B cell (primary cell): ENCODE measurements at regions of chr1 and their contacts with region 1.

Region 1: GRCh38 chr1:35451125-35451528 is 106.1 kb downstream of the KIAA0319L start:
- DNase-seq: peak; percentile 70
- ATAC-seq: peak; percentile 84
- H3K4me3 ChIP-seq: no peak overlapping the region
- H3K4me3 Mint-ChIP-seq: no peak overlapping the region
- H3K27ac ChIP-seq: no peak overlapping the region
- H3K27ac Mint-ChIP-seq: peak overlapping the region; percentile 23
- H3K4me1 ChIP-seq: no peaks in the 10 kb centered on the region
- H3K4me1 Mint-ChIP-seq: no peaks in the 10 kb centered on the region
- H3K27me3 ChIP-seq: no peaks in the 10 kb centered on the region
- H3K27me3 Mint-ChIP-seq: no peaks in the 10 kb centered on the region
- CTCF ChIP-seq: peak; percentile 82

Region 2: DNA sequence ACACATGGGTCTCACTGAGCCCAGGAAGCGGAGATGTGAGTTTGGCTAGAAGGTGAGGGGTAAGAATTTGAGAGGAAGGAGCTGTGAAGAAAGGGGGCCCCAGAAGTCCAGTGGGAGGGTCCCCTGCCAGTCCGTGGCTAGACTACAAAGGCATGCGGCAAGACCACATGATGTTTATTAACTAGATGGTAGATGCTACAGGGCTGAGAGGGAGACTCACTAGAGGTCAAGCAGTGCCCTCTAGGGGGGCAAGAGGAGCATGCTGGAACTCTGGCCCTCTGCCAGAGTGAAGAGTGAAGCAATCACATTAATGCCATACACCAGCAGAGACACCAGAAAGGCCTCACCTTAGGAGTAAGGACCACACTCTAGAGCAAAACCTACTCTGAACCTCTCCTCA is 93.9 kb after region 1 on chr1:
- CTCF ChIA-PET with region 1: interaction called, 15 read pairs
- POLR2A ChIA-PET with region 1: no interaction called
- intact Hi-C with region 1: no loop called
- DNase-seq: peak; percentile 29
- ATAC-seq: no peak
- H3K4me3 ChIP-seq: no peak overlapping the region
- H3K4me3 Mint-ChIP-seq: no peak overlapping the region
- H3K27ac ChIP-seq: no peak overlapping the region
- H3K27ac Mint-ChIP-seq: no peak overlapping the region
- H3K4me1 ChIP-seq: peaks cover 3 to 5% of the 10 kb centered on the region in 2 donors
- H3K4me1 Mint-ChIP-seq: peaks cover 28% of the 10 kb centered on the region
- H3K27me3 ChIP-seq: no peaks in the 10 kb centered on the region
- H3K27me3 Mint-ChIP-seq: no peaks in the 10 kb centered on the region
- CTCF ChIP-seq: no peak

Region 3: DNA sequence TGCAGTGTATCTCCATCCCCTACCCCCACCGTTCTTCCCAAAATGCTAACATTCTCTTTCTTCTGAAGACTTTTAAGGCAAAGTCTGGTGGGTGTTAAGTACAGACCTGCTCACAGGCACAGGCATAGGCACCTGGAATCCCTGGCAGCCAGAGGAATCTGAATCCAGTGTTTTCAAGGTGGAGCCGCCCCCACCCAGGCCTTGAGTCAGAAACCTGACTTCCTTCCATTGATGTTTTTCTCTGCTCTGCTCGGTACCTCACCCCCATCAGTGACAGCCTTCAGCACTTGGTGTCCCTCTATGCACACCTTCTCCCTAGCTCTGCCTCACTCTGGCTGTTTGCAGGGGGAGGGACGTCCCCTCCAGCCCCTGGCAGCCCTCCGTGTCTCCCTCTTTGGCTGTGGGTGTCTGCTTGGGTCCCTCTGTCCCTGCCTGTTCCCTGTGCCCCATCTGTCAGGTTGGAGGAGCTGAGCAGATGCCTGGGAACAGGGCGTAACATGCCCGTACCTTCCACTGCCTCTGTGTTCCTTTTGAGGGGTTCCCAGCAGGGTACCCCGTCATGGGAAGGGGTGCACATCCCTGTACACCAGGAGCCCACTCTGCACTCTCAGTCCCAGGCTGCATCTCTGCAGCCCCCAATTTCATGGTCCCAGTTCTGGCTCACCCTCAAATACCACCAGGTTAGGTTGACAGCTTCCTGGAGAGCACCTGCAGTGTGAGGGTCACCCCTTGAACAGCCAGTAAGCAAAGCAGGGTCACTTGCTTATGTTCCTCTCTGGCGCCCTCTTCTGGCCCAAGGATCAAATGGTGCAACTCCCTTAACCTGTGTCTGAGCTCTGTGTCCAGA is 113.1 kb after region 1 on chr1:
- CTCF ChIA-PET with region 1: interaction called, 98 read pairs
- POLR2A ChIA-PET with region 1: interaction called, 3 read pairs
- intact Hi-C with region 1: loop called (anchors 1 kb)
- DNase-seq: peak; percentile 82
- ATAC-seq: peak; percentile 71
- H3K4me3 ChIP-seq: no peak overlapping the region
- H3K4me3 Mint-ChIP-seq: no peak overlapping the region
- H3K27ac ChIP-seq: no peak overlapping the region
- H3K27ac Mint-ChIP-seq: no peak overlapping the region
- H3K4me1 ChIP-seq: no peaks in the 10 kb centered on the region
- H3K4me1 Mint-ChIP-seq: peaks cover 17% of the 10 kb centered on the region
- H3K27me3 ChIP-seq: no peaks in the 10 kb centered on the region
- H3K27me3 Mint-ChIP-seq: no peaks in the 10 kb centered on the region
- CTCF ChIP-seq: peak; percentile 85

Region 4: GRCh38 chr1:35588197-35588910 is 137.2 kb after region 1 on chr1:
- CTCF ChIA-PET with region 1: no interaction called
- POLR2A ChIA-PET with region 1: no interaction called
- intact Hi-C with region 1: no loop called
- DNase-seq: no peak
- ATAC-seq: no peak
- H3K4me3 ChIP-seq: no peak overlapping the region
- H3K4me3 Mint-ChIP-seq: no peak overlapping the region
- H3K27ac ChIP-seq: no peak overlapping the region
- H3K27ac Mint-ChIP-seq: no peak overlapping the region
- H3K4me1 ChIP-seq: no peaks in the 10 kb centered on the region
- H3K4me1 Mint-ChIP-seq: no peaks in the 10 kb centered on the region
- H3K27me3 ChIP-seq: no peaks in the 10 kb centered on the region
- H3K27me3 Mint-ChIP-seq: no peaks in the 10 kb centered on the region
- CTCF ChIP-seq: no peak

Region 5: GRCh38 chr1:35660581-35661473 is 209.7 kb after region 1 on chr1:
- CTCF ChIA-PET with region 1: no interaction called
- POLR2A ChIA-PET with region 1: no interaction called
- intact Hi-C with region 1: no loop called
- DNase-seq: no peak
- ATAC-seq: no peak
- H3K4me3 ChIP-seq: no peak overlapping the region
- H3K4me3 Mint-ChIP-seq: no peak overlapping the region
- H3K27ac ChIP-seq: no peak overlapping the region
- H3K27ac Mint-ChIP-seq: no peak overlapping the region
- H3K4me1 ChIP-seq: no peaks in the 10 kb centered on the region
- H3K4me1 Mint-ChIP-seq: peaks cover 2% of the 10 kb centered on the region
- H3K27me3 ChIP-seq: peaks cover 0 to 2% (median 0%) of the 10 kb centered on the region in 4 experiments
- H3K27me3 Mint-ChIP-seq: peaks cover 7% of the 10 kb centered on the region
- CTCF ChIP-seq: no peak

Region 6: GRCh38 chr1:35726450-35727433 is 275.6 kb after region 1 on chr1:
- CTCF ChIA-PET with region 1: interaction called, 102 read pairs
- POLR2A ChIA-PET with region 1: interaction called, 4 read pairs
- intact Hi-C with region 1: loop called (anchors 1 kb)
- DNase-seq: peak; percentile 72
- ATAC-seq: peak; percentile 76
- H3K4me3 ChIP-seq: no peak overlapping the region
- H3K4me3 Mint-ChIP-seq: no peak overlapping the region
- H3K27ac ChIP-seq: no peak overlapping the region
- H3K27ac Mint-ChIP-seq: peak overlapping the region; percentile 26
- H3K4me1 ChIP-seq: peaks cover 0 to 6% of the 10 kb centered on the region in 2 donors
- H3K4me1 Mint-ChIP-seq: peaks cover 4% of the 10 kb centered on the region
- H3K27me3 ChIP-seq: no peaks in the 10 kb centered on the region
- H3K27me3 Mint-ChIP-seq: no peaks in the 10 kb centered on the region
- CTCF ChIP-seq: peak; percentile 87

Region 7: GRCh38 chr1:35777109-35777508 is 326.0 kb after region 1 on chr1:
- CTCF ChIA-PET with region 1: interaction called, 60 read pairs
- POLR2A ChIA-PET with region 1: no interaction called
- intact Hi-C with region 1: loop called (anchors 1 kb)
- DNase-seq: no peak
- ATAC-seq: no peak
- H3K4me3 ChIP-seq: no peak overlapping the region
- H3K4me3 Mint-ChIP-seq: no peak overlapping the region
- H3K27ac ChIP-seq: no peak overlapping the region
- H3K27ac Mint-ChIP-seq: no peak overlapping the region
- H3K4me1 ChIP-seq: peaks cover 0 to 3% of the 10 kb centered on the region in 2 donors
- H3K4me1 Mint-ChIP-seq: peaks cover 5% of the 10 kb centered on the region
- H3K27me3 ChIP-seq: no peaks in the 10 kb centered on the region
- H3K27me3 Mint-ChIP-seq: no peaks in the 10 kb centered on the region
- CTCF ChIP-seq: no peak